Posterior vena cava (tissue), 2 donors: ENCODE measurements at regions of chr7 and their contacts with region 1.

Region 1: DNA sequence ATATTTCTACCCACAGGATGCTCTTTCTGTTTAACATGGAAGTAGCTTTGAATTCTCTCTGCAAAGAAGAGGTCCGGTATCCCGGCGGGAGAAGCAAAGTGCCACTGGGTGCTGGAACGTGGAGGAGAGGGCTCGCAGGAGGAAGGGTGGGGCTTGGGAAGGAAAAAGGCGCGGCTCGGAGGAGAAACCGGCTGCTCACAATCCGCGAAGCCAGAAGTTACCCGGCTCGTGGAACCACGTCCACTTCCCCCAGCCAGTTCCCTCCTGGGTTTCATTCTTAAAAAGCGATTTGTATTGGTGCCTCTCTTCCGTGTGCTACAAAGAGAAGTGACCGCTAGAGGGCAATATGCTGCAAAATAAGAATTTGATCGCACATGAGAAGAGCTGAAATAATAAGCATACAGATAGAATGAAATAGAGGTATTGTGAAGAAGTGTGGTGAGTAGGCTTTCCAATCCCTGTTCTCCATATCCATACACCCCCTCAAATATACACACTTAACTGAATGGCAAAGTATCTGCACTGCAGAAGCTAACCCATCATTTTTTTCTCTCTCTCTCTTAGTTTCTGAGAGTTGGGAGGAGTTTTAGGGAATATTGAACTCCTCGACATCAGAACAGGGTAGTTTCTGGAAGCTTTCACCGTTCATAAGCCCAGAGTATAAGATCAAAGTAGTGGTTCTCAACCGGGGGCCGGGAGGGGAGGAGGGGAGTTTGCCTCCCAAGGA is 31.1 kb downstream of the TRIL start:
- DNase-seq: peak; percentile 93

Region 2: DNA sequence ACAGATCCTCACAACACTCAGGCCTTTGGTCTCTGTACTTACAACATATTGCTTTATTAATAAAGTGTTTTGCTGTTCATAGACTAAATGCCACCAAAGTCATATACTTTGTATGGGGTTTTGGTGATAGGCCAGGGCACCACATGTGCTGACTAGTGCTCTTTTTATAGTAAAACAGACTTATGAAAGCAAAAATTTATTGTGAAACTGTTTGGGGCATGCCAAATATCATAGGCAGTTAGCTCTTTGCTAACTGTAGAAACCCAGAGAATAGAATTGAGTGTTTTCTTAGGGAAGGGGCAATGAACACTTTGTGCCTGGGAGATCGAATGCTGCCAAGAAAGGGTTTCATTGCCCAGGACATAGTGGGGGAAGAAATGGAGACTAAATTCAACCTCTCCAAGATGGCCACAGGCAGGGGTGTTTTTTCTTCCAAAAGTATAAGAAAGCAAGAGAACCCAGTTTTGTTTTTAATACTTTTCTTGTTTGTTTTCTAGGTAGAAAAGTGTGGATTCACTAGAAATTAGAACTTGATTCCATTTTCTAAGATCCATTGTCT is 111.6 kb before region 1 on chr7:
- intact Hi-C with region 1: no loop called
- DNase-seq: no peak

Region 3: DNA sequence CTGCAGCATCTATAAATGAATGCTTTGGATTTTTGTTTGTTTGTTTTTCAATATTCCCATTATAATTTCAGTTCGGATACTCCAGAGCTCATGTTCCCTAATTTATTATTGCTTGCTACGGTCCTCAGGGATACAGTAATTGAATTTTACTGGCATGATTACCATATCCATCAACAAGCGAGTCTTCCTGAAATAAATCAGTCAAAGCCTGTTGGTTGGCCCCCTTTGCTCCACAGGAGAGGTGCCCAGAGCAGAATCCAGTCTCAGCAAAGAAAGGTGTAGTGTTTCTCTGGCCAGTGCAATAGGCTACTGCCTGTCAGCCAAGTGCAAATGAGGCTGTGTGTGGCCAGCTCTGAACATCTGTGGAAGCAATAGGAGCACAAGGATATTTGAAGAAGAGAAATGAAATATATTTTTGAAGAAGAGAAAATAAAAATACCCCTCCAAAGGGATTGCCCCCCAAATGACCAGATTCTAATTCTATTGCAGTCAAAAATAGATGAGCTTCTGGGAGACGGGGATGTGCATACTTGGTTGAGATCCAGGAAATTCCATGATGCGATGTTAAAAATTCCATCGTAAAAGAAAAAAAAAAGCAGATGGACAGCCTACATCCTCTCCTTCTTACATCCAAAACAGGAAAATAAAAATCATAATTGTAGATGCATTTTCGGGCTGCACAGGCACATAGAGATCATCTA is 13.0 kb after region 1 on chr7:
- intact Hi-C with region 1: no loop called
- DNase-seq: no peak

Region 4: DNA sequence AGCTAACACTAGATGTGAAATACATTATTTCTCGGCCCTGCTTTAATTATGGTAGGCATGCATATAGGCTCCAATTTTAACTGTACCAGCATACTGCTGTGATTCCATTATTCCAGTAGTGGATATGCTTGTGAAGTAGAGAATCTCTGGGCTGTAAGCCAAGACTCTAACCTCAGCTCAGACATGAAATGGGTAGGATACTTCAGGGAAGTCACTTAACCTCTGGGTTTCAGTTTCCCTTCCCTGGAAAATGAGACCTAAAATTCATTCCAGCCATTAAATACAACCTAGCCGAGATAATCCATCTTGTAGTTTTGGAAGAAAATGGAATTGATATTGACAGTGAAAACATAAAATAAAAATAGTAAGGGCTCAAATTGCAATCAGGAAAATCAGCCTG is 90.7 kb after region 1 on chr7:
- intact Hi-C with region 1: loop called in 1 of 2 experiments (anchors 10 kb)
- DNase-seq: no peak

Region 5: GRCh38 chr7:29105752-29106668 is 179.0 kb after region 1 on chr7:
- intact Hi-C with region 1: loop called (anchors 2 kb)
- DNase-seq: no peak